ENCODE measurements at regions of chr19 and their contacts with region 1.

Region 1: DNA sequence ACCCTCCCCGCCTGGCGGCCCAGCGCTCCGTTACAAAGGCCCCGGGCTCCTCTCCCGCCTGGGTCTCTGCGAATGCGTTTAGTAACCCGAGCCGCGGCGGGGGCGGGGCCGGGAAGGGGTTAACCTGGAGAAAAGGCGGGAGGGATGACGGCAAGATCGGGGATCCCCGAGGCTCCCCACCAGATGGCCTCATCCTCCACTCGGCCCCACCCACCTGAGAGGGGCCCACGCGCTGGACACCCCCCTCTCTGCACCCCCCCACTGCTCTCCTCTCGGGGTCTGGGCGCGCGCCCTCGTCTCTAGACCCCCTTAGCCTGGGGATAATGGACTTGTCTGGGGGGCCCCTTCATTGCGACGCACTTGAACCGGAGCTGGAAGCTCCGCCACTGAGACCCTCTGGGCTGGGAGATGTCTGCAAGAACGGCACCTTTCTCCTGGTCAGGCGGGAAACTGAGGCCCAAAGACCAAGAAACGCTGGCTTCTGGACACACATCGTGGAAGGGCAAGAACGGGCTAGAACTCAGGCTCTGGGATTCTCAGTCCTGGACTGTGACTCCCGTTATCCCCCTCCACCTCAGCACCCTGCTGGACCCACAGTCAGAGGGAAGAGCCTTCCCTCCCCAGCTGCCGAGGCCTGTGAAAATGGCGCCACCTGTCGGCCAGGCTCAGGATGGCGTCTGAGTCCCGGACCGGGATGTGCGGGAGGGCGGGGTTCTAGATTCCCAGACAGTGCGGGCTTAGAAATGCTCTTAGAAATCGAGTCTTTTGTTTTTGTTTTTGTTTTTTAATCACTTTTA is 2.9 kb upstream of the LTBP4 start:
- DNase-seq: peak; percentile 87
- ATAC-seq: peak; percentile 55
- H3K4me3 ChIP-seq: peak overlapping the region; percentile 52
- H3K27ac ChIP-seq: peak overlapping the region; percentile 46
- H3K4me1 ChIP-seq: peaks cover 16% of the 10 kb centered on the region
- H3K27me3 ChIP-seq: no peaks in the 10 kb centered on the region
- CTCF ChIP-seq: peak; percentile 99
- POLR2A ChIP-seq: peak; percentile 65
- RAD21 ChIP-seq: peak; percentile 98

Region 2: GRCh38 chr19:40305403-40305802 is 292.9 kb before region 1 on chr19:
- CTCF ChIA-PET with region 1: no interaction called
- POLR2A ChIA-PET with region 1: no interaction called
- dilution Hi-C with region 1: no loop called
- in situ Hi-C with region 1: loop called (anchors 10 kb)
- intact Hi-C with region 1: loop called (anchors 1 kb)
- DNase-seq: peak; percentile 90
- ATAC-seq: peak; percentile 98
- H3K4me3 ChIP-seq: no peak overlapping the region
- H3K27ac ChIP-seq: no peak overlapping the region
- H3K4me1 ChIP-seq: no peaks in the 10 kb centered on the region
- H3K27me3 ChIP-seq: no peaks in the 10 kb centered on the region
- CTCF ChIP-seq: peak; percentile 90
- POLR2A ChIP-seq: no peak
- RAD21 ChIP-seq: peak; percentile 90

Region 3: GRCh38 chr19:40425450-40426287 is 172.7 kb before region 1 on chr19 and contains the start of gene SERTAD1:
- CTCF ChIA-PET with region 1: no interaction called
- POLR2A ChIA-PET with region 1: no interaction called
- dilution Hi-C with region 1: no loop called
- in situ Hi-C with region 1: no loop called
- intact Hi-C with region 1: loop called (anchors 2 kb)
- DNase-seq: peak; percentile 99
- ATAC-seq: peak; percentile 90
- H3K4me3 ChIP-seq: peak within 1 kb of the TSS; percentile 71
- H3K27ac ChIP-seq: peak within 1 kb of the TSS; percentile 98
- H3K4me1 ChIP-seq: peaks cover 2% of the 10 kb centered on the region; the same call in 1 of the 2 replicates
- H3K27me3 ChIP-seq: no peaks in the 10 kb centered on the region
- CTCF ChIP-seq: peak; percentile 49
- POLR2A ChIP-seq: peak; percentile 99
- RAD21 ChIP-seq: no peak
- total RNA-seq, gene SERTAD1: 25.6 and 27.4 TPM in 2 replicates

Region 4: DNA sequence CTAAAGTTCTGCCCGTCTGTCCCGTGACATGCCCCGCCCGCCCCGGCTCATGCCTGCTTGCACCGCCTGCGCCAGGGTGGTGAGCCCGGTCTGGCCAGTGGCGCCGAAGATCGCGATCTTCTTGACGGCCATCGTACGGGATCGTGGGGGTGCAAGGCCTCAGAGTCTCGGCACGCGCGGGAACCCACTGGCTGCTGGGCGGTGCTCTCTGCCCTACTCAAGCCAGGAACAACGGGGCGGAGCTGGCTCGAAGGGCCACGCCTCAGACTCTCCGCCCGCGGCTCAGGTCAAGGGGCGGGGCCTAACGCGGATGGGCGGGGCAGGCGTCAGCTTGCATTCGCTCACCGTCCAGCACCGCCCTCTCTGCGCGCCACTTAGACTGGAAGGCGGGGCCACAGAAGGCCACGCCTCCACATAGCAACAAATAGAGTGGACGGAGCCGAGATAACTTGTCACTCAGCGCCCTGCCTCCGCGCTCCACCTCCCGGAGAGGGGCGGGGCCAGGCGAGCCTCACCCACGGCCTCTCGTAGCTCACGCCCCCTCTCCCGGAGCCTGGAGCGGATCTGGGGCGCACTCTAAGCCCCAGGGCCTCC is 132.7 kb before region 1 on chr19 and contains the start of gene BLVRB:
- CTCF ChIA-PET with region 1: no interaction called
- POLR2A ChIA-PET with region 1: no interaction called
- dilution Hi-C with region 1: no loop called
- in situ Hi-C with region 1: no loop called
- intact Hi-C with region 1: loop called (anchors 1 kb)
- DNase-seq: peak; percentile 99
- ATAC-seq: peak; percentile 95
- H3K4me3 ChIP-seq: peak within 1 kb of the TSS; percentile 68
- H3K27ac ChIP-seq: peak within 1 kb of the TSS; percentile 57
- H3K4me1 ChIP-seq: peaks cover 16% of the 10 kb centered on the region
- H3K27me3 ChIP-seq: peaks cover 11% of the 10 kb centered on the region; the same call in 1 of the 2 replicates
- CTCF ChIP-seq: no peak
- POLR2A ChIP-seq: no peak
- RAD21 ChIP-seq: no peak
- total RNA-seq, gene BLVRB: 65.2 and 67.5 TPM in 2 replicates

Region 5: GRCh38 chr19:40529093-40529954 is 69.0 kb before region 1 on chr19:
- CTCF ChIA-PET with region 1: no interaction called
- POLR2A ChIA-PET with region 1: no interaction called
- dilution Hi-C with region 1: no loop called
- in situ Hi-C with region 1: no loop called
- intact Hi-C with region 1: loop called (anchors 1 kb)
- DNase-seq: peak; percentile 61
- ATAC-seq: peak; percentile 91
- H3K4me3 ChIP-seq: peak overlapping the region; percentile 37
- H3K27ac ChIP-seq: no peak overlapping the region
- H3K4me1 ChIP-seq: peaks cover 3% of the 10 kb centered on the region; the same call in 1 of the 2 replicates
- H3K27me3 ChIP-seq: peaks cover 18% of the 10 kb centered on the region
- CTCF ChIP-seq: peak; percentile 95
- POLR2A ChIP-seq: no peak
- RAD21 ChIP-seq: peak; percentile 59

Region 6: GRCh38 chr19:40549007-40549708 is 49.2 kb before region 1 on chr19:
- CTCF ChIA-PET with region 1: interaction called, 4 read pairs
- POLR2A ChIA-PET with region 1: no interaction called
- dilution Hi-C with region 1: no loop called
- in situ Hi-C with region 1: no loop called
- intact Hi-C with region 1: loop called (anchors 2 kb)
- DNase-seq: peak; percentile 39
- ATAC-seq: peak; percentile 80
- H3K4me3 ChIP-seq: no peak overlapping the region
- H3K27ac ChIP-seq: no peak overlapping the region
- H3K4me1 ChIP-seq: no peaks in the 10 kb centered on the region
- H3K27me3 ChIP-seq: peaks cover 35% of the 10 kb centered on the region
- CTCF ChIP-seq: peak; percentile 41
- POLR2A ChIP-seq: no peak
- RAD21 ChIP-seq: peak; percentile 35; the same call in 1 of the 2 replicates

Region 7: GRCh38 chr19:40921005-40921897 is 322.9 kb after region 1 on chr19:
- CTCF ChIA-PET with region 1: no interaction called
- POLR2A ChIA-PET with region 1: no interaction called
- dilution Hi-C with region 1: no loop called
- in situ Hi-C with region 1: no loop called
- intact Hi-C with region 1: no loop called
- DNase-seq: no peak
- ATAC-seq: peak; percentile 37
- H3K4me3 ChIP-seq: no peak overlapping the region
- H3K27ac ChIP-seq: no peak overlapping the region
- H3K4me1 ChIP-seq: no peaks in the 10 kb centered on the region
- H3K27me3 ChIP-seq: no peaks in the 10 kb centered on the region
- CTCF ChIP-seq: no peak
- POLR2A ChIP-seq: no peak
- RAD21 ChIP-seq: no peak